ENCODE measurements at regions of chr2 and their contacts with region 1.

Region 1: GRCh38 chr2:130372055-130372832 is 16.4 kb downstream of the PTPN18 start:
- DNase-seq: peak; percentile 78
- H3K4me3 Mint-ChIP-seq: peak overlapping the region; percentile 96
- H3K27ac Mint-ChIP-seq: peak overlapping the region; percentile 96
- H3K4me1 Mint-ChIP-seq: peaks cover 59% of the 10 kb centered on the region
- H3K27me3 Mint-ChIP-seq: peaks cover 4% of the 10 kb centered on the region

Region 2: DNA sequence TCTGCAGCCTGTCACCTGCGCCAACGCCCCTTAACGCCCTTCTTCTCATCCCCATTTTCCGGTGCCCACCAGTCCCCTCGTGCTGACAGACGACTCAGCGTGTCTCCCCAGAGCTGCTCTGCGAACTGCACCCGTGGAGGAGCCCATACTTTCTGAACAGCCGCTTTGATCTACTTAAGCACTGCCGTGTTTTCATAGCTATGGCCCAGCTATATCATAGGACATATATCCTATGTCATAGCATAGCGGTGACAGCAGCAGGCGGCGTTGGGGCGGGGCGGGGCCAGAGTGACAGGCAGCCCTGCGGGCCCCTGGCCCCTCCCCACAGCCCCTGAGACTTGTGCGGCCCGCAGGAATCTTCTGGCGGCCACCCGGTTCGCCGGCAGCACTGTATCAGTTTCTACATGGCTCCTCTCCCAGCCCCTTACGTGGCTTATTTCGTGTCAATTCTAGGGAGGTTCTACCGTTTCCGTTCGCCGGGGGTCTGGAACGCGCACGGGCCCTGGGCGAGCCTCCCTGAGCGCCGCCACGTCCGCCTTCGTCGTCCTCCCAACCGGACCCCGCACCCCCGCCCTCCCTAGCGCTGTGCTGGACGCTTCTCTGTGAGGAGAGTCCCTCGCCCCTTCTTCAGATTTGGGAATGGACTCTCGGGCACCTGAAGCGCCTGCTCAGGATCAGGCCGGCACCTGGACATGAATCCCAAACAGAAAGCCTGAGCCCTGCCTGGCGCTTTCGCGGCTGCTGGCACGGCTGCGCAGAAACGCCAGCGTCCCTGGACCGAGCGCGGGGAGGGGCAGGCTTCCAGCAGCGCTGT is 19.0 kb after region 1 on chr2:
- intact Hi-C with region 1: loop called (anchors 1 kb)
- DNase-seq: peak; percentile 68
- H3K4me3 Mint-ChIP-seq: peak overlapping the region; percentile 93
- H3K27ac Mint-ChIP-seq: peak overlapping the region; percentile 93
- H3K4me1 Mint-ChIP-seq: peaks cover 19% of the 10 kb centered on the region
- H3K27me3 Mint-ChIP-seq: peaks cover 12% of the 10 kb centered on the region

Measured in activated T-helper 1 cell treated with anti-CD3 and anti-CD28 coated beads, Interleukin-12 subunit alpha, Interleukin-12 subunit beta, Interleukin-2, Interleukin-4 antibody, amounts not matched to agents 30 ng/mL and 10 ng/mL and 1 ng/mL, durations not matched to agents 14 hours and 24 hours and 36 hours (primary cell).